T-cell (primary cell): ENCODE measurements at regions of chr22 and their contacts with region 1.

Region 1: GRCh38 chr22:22810018-22810427 is 77.6 kb upstream of the IGLL5 start:
- DNase-seq: peak in 31 of 35 experiments; percentile 31 to 92 (median 67)
- ATAC-seq: peak; percentile 85 to 93 (median 85)
- H3K4me3 ChIP-seq: no peak overlapping the region
- H3K4me3 Mint-ChIP-seq: peak overlapping the region in 1 of 3 donors; percentile 40
- H3K27ac ChIP-seq: peak overlapping the region; percentile 11
- H3K27ac Mint-ChIP-seq: peak overlapping the region; percentile 50 to 70
- H3K4me1 ChIP-seq: peaks cover 3 to 45% of the 10 kb centered on the region in 2 experiments
- H3K4me1 Mint-ChIP-seq: peaks cover 37 to 66% (median 59%) of the 10 kb centered on the region in 3 donors
- H3K27me3 ChIP-seq: no peaks in the 10 kb centered on the region
- H3K27me3 Mint-ChIP-seq: no peaks in the 10 kb centered on the region

Region 2: GRCh38 chr22:22753526-22754267 is 56.3 kb before region 1 on chr22:
- CTCF ChIA-PET with region 1: interaction called in 1 of 2 experiments, 17 read pairs
- POLR2A ChIA-PET with region 1: interaction called in 1 of 2 experiments, 3 read pairs
- DNase-seq: peak; percentile 61 to 89 (median 78)
- ATAC-seq: peak; percentile 84 to 91 (median 88)
- H3K4me3 ChIP-seq: peak overlapping the region in 1 of 2 donors; percentile 3
- H3K4me3 Mint-ChIP-seq: peak overlapping the region in 2 of 3 donors; percentile 13 to 52
- H3K27ac ChIP-seq: peak overlapping the region; percentile 78
- H3K27ac Mint-ChIP-seq: peak overlapping the region; percentile 96 to 99
- H3K4me1 ChIP-seq: peaks cover 3 to 61% of the 10 kb centered on the region in 2 experiments
- H3K4me1 Mint-ChIP-seq: peaks cover 38 to 60% (median 40%) of the 10 kb centered on the region in 3 donors
- H3K27me3 ChIP-seq: no peaks in the 10 kb centered on the region
- H3K27me3 Mint-ChIP-seq: no peaks in the 10 kb centered on the region

Region 3: GRCh38 chr22:22848364-22848866 is 38.4 kb after region 1 on chr22:
- CTCF ChIA-PET with region 1: interaction called, 4 to 19 read pairs
- POLR2A ChIA-PET with region 1: no interaction called
- DNase-seq: peak; percentile 21 to 83 (median 55)
- ATAC-seq: peak; percentile 75 to 85 (median 82)
- H3K4me3 ChIP-seq: no peak overlapping the region
- H3K4me3 Mint-ChIP-seq: no peak overlapping the region
- H3K27ac ChIP-seq: no peak overlapping the region
- H3K27ac Mint-ChIP-seq: peak overlapping the region in 1 of 2 donors; percentile 1
- H3K4me1 ChIP-seq: peaks cover 6 to 17% of the 10 kb centered on the region in 2 experiments
- H3K4me1 Mint-ChIP-seq: peaks cover 44 to 68% (median 59%) of the 10 kb centered on the region in 3 donors
- H3K27me3 ChIP-seq: peaks cover 0 to 6% of the 10 kb centered on the region in 2 experiments
- H3K27me3 Mint-ChIP-seq: no peaks in the 10 kb centered on the region

Region 4: GRCh38 chr22:23322547-23322946 is 512.5 kb after region 1 on chr22:
- CTCF ChIA-PET with region 1: no interaction called
- POLR2A ChIA-PET with region 1: no interaction called
- DNase-seq: no peak
- ATAC-seq: no peak
- H3K4me3 ChIP-seq: no peak overlapping the region
- H3K4me3 Mint-ChIP-seq: no peak overlapping the region
- H3K27ac ChIP-seq: no peak overlapping the region
- H3K27ac Mint-ChIP-seq: no peak overlapping the region
- H3K4me1 ChIP-seq: no peaks in the 10 kb centered on the region
- H3K4me1 Mint-ChIP-seq: no peaks in the 10 kb centered on the region
- H3K27me3 ChIP-seq: no peaks in the 10 kb centered on the region
- H3K27me3 Mint-ChIP-seq: no peaks in the 10 kb centered on the region